Common myeloid progenitor, CD34-positive (primary cell): ENCODE measurements at regions of chr17 and their contacts with region 1.

Region 1: GRCh38 chr17:19766422-19767270 is 18.5 kb upstream of the ALDH3A1 start:
- DNase-seq: peak; percentile 46 to 57 (median 56)
- H3K4me3 ChIP-seq: no peak overlapping the region
- H3K27ac ChIP-seq: no peak overlapping the region
- H3K4me1 ChIP-seq: peaks cover 0 to 20% (median 6%) of the 10 kb centered on the region in 4 experiments
- H3K27me3 ChIP-seq: peaks cover 0 to 2% (median 0%) of the 10 kb centered on the region in 5 experiments

Region 2: GRCh38 chr17:19744922-19745757 is 21.5 kb before region 1 on chr17:
- CTCF ChIA-PET with region 1: interaction called, 44 read pairs
- POLR2A ChIA-PET with region 1: no interaction called
- DNase-seq: peak; percentile 81 to 91 (median 88)
- H3K4me3 ChIP-seq: peak overlapping the region in 4 of 7 experiments; percentile 22 to 80 (median 62)
- H3K27ac ChIP-seq: no peak overlapping the region
- H3K4me1 ChIP-seq: peaks cover 0 to 8% (median 6%) of the 10 kb centered on the region in 4 experiments
- H3K27me3 ChIP-seq: peaks cover 0 to 2% (median 0%) of the 10 kb centered on the region in 5 experiments

Region 3: DNA sequence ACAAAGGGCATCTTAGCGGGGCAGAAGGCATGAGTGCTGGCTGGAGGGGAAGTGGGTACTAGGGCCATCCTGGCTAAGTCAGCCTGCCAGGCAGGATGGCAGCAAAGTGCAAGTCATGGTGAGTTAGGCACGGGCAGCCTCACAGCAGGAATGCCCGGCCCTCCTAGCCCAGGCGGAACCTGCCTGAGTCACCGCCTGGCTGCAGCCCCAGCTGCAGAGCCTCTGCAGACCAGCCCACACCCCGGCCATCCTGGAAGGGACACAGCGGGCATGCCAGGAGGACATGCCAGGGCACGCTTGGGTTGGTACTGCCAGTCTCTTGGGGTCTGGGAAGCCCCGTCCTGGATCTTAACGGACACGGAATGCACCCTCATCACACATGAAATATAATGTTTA is 13.6 kb before region 1 on chr17:
- CTCF ChIA-PET with region 1: interaction called, 44 read pairs
- POLR2A ChIA-PET with region 1: no interaction called
- DNase-seq: peak; percentile 72 to 92 (median 89)
- H3K4me3 ChIP-seq: peak overlapping the region in 2 of 7 experiments; percentile 32 to 42
- H3K27ac ChIP-seq: no peak overlapping the region
- H3K4me1 ChIP-seq: peaks cover 0 to 16% (median 12%) of the 10 kb centered on the region in 4 experiments
- H3K27me3 ChIP-seq: peaks cover 0 to under 1% (median 0%) of the 10 kb centered on the region in 5 experiments